ENCODE measurements at regions of chr2 and their contacts with region 1.

Region 1: GRCh38 chr2:54899576-54900200 is 150.6 kb downstream of the RTN4 start:
- DNase-seq: no peak
- ATAC-seq: peak; percentile 31; the same call in 1 of the 2 replicates
- H3K4me3 ChIP-seq: no peak overlapping the region
- H3K27ac ChIP-seq: peak overlapping the region; percentile 94
- H3K4me1 ChIP-seq: peaks cover 32% of the 10 kb centered on the region
- H3K27me3 ChIP-seq: no peaks in the 10 kb centered on the region
- CTCF ChIP-seq: peak; percentile 79

Region 2: DNA sequence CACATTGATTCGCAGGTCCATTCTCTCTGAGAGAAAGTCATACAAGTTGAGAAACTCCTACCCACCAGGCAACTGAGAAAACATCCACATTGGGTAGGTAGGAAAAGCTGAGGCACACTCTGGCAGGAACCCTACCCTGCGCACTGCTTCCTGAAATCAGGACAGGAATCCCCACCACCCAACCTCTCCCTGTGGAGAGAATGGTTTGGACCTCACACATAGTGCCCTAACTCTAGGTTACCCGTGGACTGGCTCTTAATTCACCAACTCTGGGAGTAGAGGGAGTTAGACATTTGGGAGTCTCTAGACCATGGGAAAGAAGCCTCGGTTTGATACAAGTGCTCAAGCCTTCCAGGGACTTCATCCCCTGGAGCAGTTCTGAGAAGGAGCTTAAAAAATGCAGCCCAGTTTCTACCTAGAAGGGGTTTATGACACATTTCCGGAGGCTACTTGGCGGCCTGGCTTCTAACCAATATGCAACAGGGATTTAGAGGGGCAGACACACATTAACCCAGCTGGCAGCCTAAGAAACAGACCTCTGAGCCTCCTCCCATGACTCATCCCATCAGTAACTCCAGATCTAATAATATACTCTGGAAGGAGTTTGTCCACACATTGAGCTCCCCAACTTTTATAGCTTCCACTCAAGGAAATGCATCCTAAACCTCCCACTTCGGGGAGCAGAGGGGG is 39.5 kb before region 1 on chr2:
- CTCF ChIA-PET with region 1: no interaction called
- POLR2A ChIA-PET with region 1: no interaction called
- in situ Hi-C with region 1: no loop called
- intact Hi-C with region 1: no loop called
- DNase-seq: no peak
- ATAC-seq: no peak
- H3K4me3 ChIP-seq: no peak overlapping the region
- H3K27ac ChIP-seq: 0 out of 2 replicates have a peak overlapping the region, but pooled peaks have one; percentile 9
- H3K4me1 ChIP-seq: no peaks in the 10 kb centered on the region
- H3K27me3 ChIP-seq: no peaks in the 10 kb centered on the region
- CTCF ChIP-seq: no peak

Region 3: DNA sequence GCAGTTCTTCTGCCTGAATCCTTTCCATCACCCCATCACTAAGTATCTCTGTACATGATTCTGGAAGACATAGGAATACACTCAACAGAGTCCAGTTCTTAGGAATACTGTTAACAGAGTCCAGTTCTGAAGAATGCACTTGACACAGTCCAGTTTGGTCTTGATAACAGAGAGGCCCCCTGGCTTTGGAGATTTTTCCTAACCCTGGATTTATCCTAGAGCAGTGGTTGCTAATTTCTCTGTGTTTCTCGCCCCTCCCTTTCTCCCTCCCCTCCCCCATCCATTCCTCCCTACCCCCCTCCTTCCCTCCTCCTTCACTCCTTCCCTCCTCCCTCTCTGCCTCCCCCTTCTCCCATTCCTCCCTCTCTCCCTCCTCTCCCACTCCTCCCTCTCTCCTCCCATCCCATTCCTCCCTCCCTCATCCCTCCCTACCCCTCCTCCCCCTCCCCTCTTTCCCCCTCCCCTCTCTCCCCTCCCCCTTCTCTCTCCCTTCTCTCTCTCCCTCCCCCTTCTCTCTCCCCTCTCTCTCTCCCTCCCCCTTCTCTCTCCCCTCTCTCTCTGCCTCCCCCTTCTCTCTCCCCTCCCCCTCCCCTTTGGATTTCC is 45.1 kb after region 1 on chr2:
- CTCF ChIA-PET with region 1: interaction called, 3 read pairs
- POLR2A ChIA-PET with region 1: no interaction called
- in situ Hi-C with region 1: no loop called
- intact Hi-C with region 1: loop called (anchors 1 kb)
- DNase-seq: no peak
- ATAC-seq: no peak
- H3K4me3 ChIP-seq: no peak overlapping the region
- H3K27ac ChIP-seq: peak overlapping the region; percentile 59; the same call in 1 of the 2 replicates
- H3K4me1 ChIP-seq: no peaks in the 10 kb centered on the region
- H3K27me3 ChIP-seq: no peaks in the 10 kb centered on the region
- CTCF ChIP-seq: no peak

Region 4: DNA sequence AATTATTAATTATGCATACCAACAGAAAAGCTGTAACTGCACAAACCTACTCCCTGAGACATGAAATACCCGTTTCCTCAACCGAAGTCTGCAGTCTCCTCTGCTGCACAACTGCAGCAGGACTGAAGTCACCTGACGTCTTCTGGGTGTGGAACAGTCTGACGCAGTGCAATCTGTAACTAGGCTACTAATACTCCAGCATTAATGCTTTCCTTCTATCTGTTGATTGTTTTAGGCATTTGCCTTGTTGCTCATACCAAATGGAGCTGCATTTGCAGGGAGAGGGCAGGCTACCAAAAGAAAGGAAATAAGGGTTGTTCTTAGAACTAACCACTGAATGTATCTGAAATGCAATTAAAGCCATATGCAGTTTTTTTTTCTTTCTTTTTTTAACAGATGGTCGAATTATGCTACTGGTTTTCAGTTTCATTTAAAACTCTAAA is 110.5 kb after region 1 on chr2:
- CTCF ChIA-PET with region 1: interaction called, 3 read pairs
- POLR2A ChIA-PET with region 1: interaction called, 3 read pairs
- in situ Hi-C with region 1: no loop called
- intact Hi-C with region 1: loop called (anchors 5 kb)
- DNase-seq: no peak
- ATAC-seq: peak; percentile 87
- H3K4me3 ChIP-seq: peak overlapping the region; percentile 38 to 51
- H3K27ac ChIP-seq: peak overlapping the region; percentile 91
- H3K4me1 ChIP-seq: peaks cover 99% of the 10 kb centered on the region
- H3K27me3 ChIP-seq: no peaks in the 10 kb centered on the region
- CTCF ChIP-seq: no peak

Region 5: GRCh38 chr2:55168221-55169154 is 268.8 kb after region 1 on chr2:
- CTCF ChIA-PET with region 1: interaction called, 7 read pairs
- POLR2A ChIA-PET with region 1: no interaction called
- in situ Hi-C with region 1: no loop called
- intact Hi-C with region 1: loop called (anchors 2 kb)
- DNase-seq: no peak
- ATAC-seq: peak; percentile 80
- H3K4me3 ChIP-seq: no peak overlapping the region
- H3K27ac ChIP-seq: peak overlapping the region; percentile 60
- H3K4me1 ChIP-seq: peaks cover 23% of the 10 kb centered on the region
- H3K27me3 ChIP-seq: no peaks in the 10 kb centered on the region
- CTCF ChIP-seq: peak; percentile 77

Region 6: DNA sequence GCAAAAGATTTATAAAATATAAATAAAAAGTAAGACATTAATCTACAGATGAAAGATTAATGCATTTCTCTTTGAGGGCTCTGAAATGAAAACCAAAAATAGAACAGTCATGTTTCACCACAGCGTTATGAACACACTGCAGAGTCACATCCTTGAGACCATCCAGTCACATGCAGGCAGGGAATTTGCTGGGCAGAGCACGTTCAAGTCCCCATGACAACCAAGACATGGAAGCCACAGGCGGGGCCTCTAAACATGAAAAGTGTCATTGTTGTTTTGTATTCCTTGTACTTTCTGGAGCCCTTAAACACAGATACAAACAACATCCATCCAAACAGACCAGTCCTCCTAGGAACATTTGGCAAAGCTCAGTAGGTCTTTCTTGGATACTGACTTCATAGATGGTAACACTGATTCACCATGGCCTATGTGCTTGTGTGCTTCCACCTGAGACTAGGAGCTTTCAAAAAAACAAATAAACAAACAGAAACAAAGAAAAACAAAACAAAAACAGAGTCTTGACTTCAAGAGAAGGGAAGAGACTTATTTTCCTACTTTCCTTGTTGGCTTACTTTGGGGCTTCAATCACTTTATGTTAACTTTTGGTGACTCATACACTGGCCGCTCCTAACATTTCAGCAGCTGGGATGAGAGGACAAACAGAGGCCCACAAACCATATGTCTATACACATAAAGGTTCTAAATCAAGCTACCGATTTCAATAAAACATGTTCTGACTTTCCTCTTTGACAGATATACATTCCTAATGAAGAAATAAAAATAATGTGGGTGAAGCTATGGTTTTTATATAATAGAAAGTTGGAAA is 1184.6 kb after region 1 on chr2:
- CTCF ChIA-PET with region 1: no interaction called
- POLR2A ChIA-PET with region 1: no interaction called
- in situ Hi-C with region 1: no loop called
- intact Hi-C with region 1: no loop called
- DNase-seq: peak; percentile 20
- ATAC-seq: no peak
- H3K4me3 ChIP-seq: no peak overlapping the region
- H3K27ac ChIP-seq: no peak overlapping the region
- H3K4me1 ChIP-seq: no peaks in the 10 kb centered on the region
- H3K27me3 ChIP-seq: no peaks in the 10 kb centered on the region
- CTCF ChIP-seq: no peak

Measured in Panc1 (cell line).